ENCODE measurements at regions of chr5 and their contacts with region 1.

Region 1: GRCh38 chr5:151740336-151740942 is 18.0 kb downstream of the ATOX1 start:
- DNase-seq: peak; percentile 60
- H3K4me3 ChIP-seq: no peak overlapping the region
- H3K27ac ChIP-seq: peak overlapping the region; percentile 81
- H3K4me1 ChIP-seq: peaks cover 58% of the 10 kb centered on the region
- H3K27me3 ChIP-seq: no peaks in the 10 kb centered on the region
- CTCF ChIP-seq: peak; percentile 81

Region 2: DNA sequence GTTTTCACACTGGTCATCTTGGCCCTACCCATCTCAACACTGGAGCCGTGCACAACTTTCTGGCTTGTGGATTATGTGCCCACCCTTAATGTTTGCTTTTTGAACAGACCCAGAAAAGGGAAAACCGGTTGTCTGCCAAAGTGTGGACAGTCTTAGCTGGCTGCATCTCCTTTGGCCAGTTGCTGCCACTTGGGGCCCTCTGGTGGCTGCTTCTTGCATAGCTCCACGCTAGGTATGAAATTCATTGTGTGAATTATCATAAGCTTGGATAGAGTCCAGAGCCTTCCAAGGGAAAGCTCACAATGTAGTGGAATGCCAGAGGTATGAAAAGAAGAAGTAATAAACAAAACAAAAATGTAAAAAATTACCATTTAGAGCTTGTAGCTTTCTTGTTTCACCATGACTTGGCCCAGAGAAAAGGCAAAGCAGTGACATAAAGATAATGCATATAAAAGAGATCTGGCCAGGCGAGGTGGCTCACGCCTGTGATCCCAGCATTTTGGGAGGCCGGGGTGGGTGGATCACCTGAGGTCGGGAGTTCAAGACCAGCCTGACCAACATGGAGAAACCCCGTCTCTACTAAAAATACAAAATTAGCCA is 424.3 kb before region 1 on chr5:
- CTCF ChIA-PET with region 1: no interaction called
- dilution Hi-C with region 1: no loop called
- in situ Hi-C with region 1: no loop called
- intact Hi-C with region 1: loop called (anchors 5 kb)
- DNase-seq: peak; percentile 55
- H3K4me3 ChIP-seq: no peak overlapping the region
- H3K27ac ChIP-seq: no peak overlapping the region
- H3K4me1 ChIP-seq: no peaks in the 10 kb centered on the region
- H3K27me3 ChIP-seq: no peaks in the 10 kb centered on the region
- CTCF ChIP-seq: peak; percentile 96 to 98

Region 3: DNA sequence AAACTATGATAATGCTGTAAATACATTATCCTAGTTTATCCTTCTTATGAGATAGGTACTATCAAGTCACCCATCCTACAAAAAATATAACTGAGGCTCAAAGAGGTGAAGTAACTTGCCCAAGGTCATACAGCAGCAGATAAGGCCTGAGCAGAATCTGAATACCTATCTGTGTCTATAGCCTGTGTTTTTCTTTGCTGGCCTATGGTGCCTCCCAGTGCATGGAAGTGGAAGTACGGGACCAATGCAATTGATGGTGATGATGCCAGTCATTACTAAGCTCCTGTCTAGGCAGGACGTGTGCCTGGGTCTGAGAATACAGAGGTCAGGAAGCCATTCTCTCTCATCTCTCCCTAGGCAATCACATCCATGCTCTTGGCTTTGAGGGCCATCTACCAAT is 217.1 kb before region 1 on chr5:
- CTCF ChIA-PET with region 1: no interaction called
- dilution Hi-C with region 1: no loop called
- in situ Hi-C with region 1: no loop called
- intact Hi-C with region 1: loop called (anchors 10 kb)
- DNase-seq: peak; percentile 59
- H3K4me3 ChIP-seq: no peak overlapping the region
- H3K27ac ChIP-seq: no peak overlapping the region
- H3K4me1 ChIP-seq: no peaks in the 10 kb centered on the region
- H3K27me3 ChIP-seq: no peaks in the 10 kb centered on the region
- CTCF ChIP-seq: peak; percentile 61 to 63

Region 4: DNA sequence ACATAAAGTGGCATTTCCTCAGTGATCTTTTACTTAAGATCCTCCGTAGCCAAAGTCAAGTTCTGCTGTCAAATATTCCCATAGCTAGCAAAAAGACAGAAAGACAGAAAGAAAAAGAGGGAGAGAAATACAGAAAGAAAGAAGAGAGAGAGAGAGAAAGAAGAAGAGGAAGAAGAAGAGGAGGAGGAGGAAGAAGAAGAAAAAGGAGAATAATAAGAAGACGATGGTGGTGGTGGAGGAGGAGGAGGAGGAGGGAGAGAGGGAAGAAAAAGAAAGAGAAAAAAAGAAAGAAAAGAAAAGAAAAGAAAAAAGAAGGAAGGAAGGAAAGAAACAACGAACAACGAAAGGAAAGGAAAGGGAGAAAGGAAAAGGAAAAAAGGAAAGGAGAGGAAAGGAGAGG is 203.4 kb before region 1 on chr5:
- CTCF ChIA-PET with region 1: no interaction called
- dilution Hi-C with region 1: no loop called
- in situ Hi-C with region 1: no loop called
- intact Hi-C with region 1: no loop called
- DNase-seq: no peak
- H3K4me3 ChIP-seq: no peak overlapping the region
- H3K27ac ChIP-seq: no peak overlapping the region
- H3K4me1 ChIP-seq: no peaks in the 10 kb centered on the region
- H3K27me3 ChIP-seq: no peaks in the 10 kb centered on the region
- CTCF ChIP-seq: no peak

Region 5: DNA sequence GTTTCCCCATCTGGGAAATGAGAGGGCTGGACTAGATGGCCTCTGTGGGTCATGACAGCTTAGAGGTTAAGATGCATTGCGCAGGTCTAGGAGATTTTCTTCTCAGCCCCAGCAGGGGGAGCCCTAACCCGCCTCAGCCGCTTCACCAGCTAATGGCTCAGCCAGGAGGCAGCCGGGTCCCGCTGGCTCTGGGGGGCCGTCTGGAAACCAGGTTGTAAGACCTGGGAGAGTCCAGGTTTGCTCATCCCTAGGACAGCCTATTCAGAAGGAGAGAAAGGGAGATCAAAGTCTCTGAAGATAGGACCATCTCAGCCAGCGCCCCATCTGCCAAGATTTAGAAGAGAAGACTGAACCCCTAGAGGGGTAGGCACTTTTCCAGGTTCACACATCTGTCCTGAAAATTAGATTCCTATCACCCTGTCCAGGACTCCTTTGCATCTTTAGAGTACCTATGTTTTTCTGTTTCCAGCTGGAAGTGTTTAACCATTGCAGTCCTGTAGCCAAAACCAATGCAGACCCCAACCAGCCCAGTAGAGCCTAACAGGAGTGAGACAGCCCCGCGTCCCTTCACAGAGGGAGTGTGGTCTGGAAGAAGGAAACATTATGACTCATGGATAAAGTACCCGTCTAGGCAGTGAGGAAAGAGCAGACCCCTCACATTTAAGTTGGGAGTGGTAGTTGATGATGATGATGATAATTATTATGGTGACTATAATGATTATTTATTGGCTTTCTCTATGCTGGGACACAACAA is 81.3 kb before region 1 on chr5:
- CTCF ChIA-PET with region 1: interaction called, 20 read pairs
- dilution Hi-C with region 1: no loop called
- in situ Hi-C with region 1: loop called (anchors 5 kb)
- intact Hi-C with region 1: loop called (anchors 1 kb)
- DNase-seq: peak; percentile 57
- H3K4me3 ChIP-seq: no peak overlapping the region
- H3K27ac ChIP-seq: no peak overlapping the region
- H3K4me1 ChIP-seq: peaks cover 7% of the 10 kb centered on the region
- H3K27me3 ChIP-seq: no peaks in the 10 kb centered on the region
- CTCF ChIP-seq: peak; percentile 71 to 89

Region 6: GRCh38 chr5:151686674-151687407 is 53.6 kb before region 1 on chr5 and contains the start of gene SPARC:
- CTCF ChIA-PET with region 1: interaction called, 3 read pairs
- dilution Hi-C with region 1: no loop called
- in situ Hi-C with region 1: no loop called
- intact Hi-C with region 1: loop called (anchors 1 kb)
- DNase-seq: peak; percentile 80
- H3K4me3 ChIP-seq: peak within 1 kb of the TSS; percentile 60 to 70 (median 62)
- H3K27ac ChIP-seq: peak within 1 kb of the TSS; percentile 81
- H3K4me1 ChIP-seq: peaks cover 42% of the 10 kb centered on the region
- H3K27me3 ChIP-seq: no peaks in the 10 kb centered on the region
- CTCF ChIP-seq: no peak
- total RNA-seq, gene SPARC: 222 to 382 TPM

Region 7: DNA sequence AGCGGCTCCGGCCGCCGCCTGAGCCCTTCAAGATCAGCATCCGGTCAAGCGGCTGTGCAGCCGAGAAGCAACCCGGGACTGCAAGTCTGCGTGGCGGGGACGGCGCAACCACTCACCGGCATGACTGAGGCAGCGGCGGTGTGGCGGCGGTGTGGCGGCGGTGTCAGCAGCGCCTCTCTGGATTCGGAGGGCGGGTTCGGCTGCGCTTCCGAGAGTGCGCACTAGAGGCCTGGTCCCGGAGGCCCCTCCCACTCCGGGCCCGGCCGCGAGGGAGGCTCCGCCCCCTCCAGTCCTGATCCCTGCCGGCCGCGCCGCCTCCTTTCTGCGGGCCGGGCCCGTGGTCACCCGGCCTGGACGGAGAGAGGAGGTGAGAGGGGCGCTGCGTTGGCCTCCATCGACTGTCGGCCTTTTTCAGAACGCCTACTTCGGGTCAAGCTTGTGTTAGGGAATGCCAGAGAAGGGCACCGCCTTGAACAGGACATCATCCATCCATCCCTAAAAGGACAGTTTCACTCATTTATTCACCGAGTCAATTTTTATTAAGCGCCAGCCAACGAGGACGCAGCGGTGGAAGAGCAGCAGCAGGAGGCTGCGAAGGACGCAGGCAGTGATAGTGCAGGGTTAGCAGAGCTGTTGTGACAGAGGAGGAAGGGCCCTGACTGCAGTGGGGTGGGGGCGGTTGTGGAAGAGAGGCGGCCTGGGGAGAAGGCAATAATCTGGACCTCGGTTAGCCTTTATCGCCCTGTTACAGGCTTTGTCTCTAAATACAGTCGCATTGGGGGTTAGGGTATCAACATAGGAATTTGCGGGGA is 18.2 kb after region 1 on chr5 and contains the start of gene ATOX1:
- CTCF ChIA-PET with region 1: no interaction called
- dilution Hi-C with region 1: no loop called
- in situ Hi-C with region 1: no loop called
- intact Hi-C with region 1: loop called (anchors 1 kb)
- DNase-seq: peak; percentile 87
- H3K4me3 ChIP-seq: peak within 1 kb of the TSS; percentile 80 to 86 (median 83)
- H3K27ac ChIP-seq: peak within 1 kb of the TSS; percentile 23
- H3K4me1 ChIP-seq: peaks cover 22% of the 10 kb centered on the region
- H3K27me3 ChIP-seq: no peaks in the 10 kb centered on the region
- CTCF ChIP-seq: no peak
- total RNA-seq, gene ATOX1: 27.0 to 89.2 TPM

Region 8: GRCh38 chr5:151855701-151856100 is 115.3 kb after region 1 on chr5:
- CTCF ChIA-PET with region 1: no interaction called
- dilution Hi-C with region 1: no loop called
- in situ Hi-C with region 1: no loop called
- intact Hi-C with region 1: no loop called
- DNase-seq: no peak
- H3K4me3 ChIP-seq: no peak overlapping the region
- H3K27ac ChIP-seq: no peak overlapping the region
- H3K4me1 ChIP-seq: no peaks in the 10 kb centered on the region
- H3K27me3 ChIP-seq: no peaks in the 10 kb centered on the region
- CTCF ChIP-seq: no peak